Right ventricle myocardium inferior (tissue), 1 donor: ENCODE measurements at regions of chr16 and their contacts with region 1.

Region 1: GRCh38 chr16:58047557-58048348 is 22.2 kb downstream of the MMP15 start:
- DNase-seq: no peak
- ATAC-seq: peak; percentile 18

Region 2: DNA sequence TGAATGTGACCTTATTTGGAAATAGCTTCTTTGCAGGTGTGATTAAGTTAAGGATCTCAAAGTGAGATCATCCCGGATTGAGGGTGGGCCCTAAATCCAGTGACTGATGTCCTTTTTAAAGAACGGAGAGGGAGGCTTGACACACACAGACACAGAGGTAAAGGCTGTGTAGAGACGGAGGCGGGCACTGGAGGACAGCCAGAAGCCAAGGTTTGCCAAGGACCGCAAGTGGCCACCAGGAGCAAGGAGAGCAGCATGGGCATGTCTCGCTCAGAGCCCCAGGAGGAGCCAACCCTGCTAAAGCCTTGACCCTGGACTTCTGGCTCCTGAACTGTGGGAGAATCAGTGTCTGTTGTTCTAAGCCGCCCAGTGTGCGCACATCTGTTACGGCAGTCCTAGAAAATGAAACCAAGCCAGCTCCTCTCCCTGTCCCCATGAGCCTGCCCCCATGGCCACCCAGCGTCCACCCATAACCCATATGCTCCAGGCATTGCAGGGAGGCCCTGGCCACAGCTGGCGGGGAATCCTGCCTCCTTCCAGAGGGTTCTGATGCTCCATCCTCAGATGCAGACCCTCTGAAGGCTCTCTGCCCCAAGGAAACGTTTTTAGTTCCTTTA is 92.1 kb before region 1 on chr16:
- intact Hi-C with region 1: no loop called
- DNase-seq: no peak
- ATAC-seq: peak; percentile 54

Region 3: DNA sequence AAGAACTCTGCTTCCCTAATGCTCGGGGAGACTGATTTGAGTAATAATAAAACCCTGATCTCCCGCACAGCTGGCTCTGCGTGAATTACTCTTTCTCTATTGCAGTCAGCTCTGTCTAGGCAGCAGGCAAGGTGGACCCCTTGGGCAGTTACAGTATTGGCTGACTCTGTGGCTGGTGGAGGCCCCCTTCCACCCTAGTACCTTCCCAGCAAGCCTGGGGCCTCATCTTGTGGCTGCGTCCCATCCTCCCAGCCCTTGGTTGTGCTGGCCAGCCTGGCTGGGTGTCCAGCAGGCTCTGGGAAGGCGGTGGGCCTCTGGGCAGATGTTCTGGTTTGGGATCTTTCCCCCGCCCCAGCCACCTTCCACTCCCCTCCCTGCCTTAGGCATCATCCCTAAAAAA is 36.9 kb after region 1 on chr16:
- intact Hi-C with region 1: loop called (anchors 5 kb)
- DNase-seq: no peak
- ATAC-seq: no peak